ENCODE measurements at regions of chr6 and their contacts with region 1.

Region 1: DNA sequence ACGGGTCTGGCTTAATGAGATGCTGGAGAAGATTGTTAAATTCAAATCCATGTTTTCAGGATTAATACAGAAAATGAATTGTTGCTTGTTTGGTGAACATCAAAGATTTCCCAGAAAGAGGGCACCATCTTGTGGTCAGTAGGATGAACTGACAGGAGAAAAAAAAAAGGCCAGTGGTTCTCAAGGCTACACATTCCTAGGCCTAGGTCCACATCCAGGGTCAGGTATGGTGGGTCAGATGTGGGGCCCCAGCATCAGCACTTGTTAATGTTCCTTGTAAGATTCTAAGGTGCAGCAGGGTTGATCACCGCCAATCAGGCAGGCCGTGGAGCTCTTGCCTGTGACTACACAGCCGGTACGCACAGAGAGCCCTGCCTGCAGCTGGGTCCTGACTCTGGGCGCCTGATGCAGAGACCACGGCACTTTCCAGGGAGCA is 34.0 kb upstream of the FOXO3 start:
- DNase-seq: no peak
- H3K4me3 ChIP-seq: no peak overlapping the region
- H3K27ac ChIP-seq: no peak overlapping the region
- H3K27me3 ChIP-seq: no peaks in the 10 kb centered on the region
- CTCF ChIP-seq: peak; percentile 68 to 93 (median 86)

Region 2: DNA sequence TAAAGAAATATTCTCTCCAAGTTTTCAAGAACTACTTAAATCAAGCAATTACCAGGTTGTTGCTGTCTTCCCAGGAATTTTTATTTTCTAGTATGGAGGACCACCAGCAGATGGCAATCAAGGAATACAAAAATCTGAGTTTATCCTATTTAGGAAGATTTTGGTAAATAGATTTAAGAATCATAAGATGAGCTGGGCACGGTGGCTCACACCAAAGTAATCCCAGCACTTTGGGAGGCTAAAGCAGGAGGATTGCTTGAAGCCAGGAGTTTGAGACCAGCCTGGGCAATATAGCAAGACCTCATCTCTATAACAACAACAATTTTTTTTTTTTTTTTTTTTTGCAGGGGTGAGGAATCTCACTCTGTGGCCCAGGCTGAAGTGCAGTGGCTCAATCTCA is 549.5 kb before region 1 on chr6:
- intact Hi-C with region 1: loop called (anchors 2 to 10 kb)
- DNase-seq: no peak
- H3K4me3 ChIP-seq: no peak overlapping the region
- H3K27ac ChIP-seq: no peak overlapping the region
- H3K27me3 ChIP-seq: no peaks in the 10 kb centered on the region
- CTCF ChIP-seq: peak; percentile 22 to 78 (median 63)

Region 3: GRCh38 chr6:107982486-107982885 is 544.3 kb before region 1 on chr6:
- intact Hi-C with region 1: loop called (anchors 2 to 10 kb)
- DNase-seq: no peak
- H3K4me3 ChIP-seq: no peak overlapping the region
- H3K27ac ChIP-seq: no peak overlapping the region
- H3K27me3 ChIP-seq: no peaks in the 10 kb centered on the region
- CTCF ChIP-seq: no peak

Region 4: DNA sequence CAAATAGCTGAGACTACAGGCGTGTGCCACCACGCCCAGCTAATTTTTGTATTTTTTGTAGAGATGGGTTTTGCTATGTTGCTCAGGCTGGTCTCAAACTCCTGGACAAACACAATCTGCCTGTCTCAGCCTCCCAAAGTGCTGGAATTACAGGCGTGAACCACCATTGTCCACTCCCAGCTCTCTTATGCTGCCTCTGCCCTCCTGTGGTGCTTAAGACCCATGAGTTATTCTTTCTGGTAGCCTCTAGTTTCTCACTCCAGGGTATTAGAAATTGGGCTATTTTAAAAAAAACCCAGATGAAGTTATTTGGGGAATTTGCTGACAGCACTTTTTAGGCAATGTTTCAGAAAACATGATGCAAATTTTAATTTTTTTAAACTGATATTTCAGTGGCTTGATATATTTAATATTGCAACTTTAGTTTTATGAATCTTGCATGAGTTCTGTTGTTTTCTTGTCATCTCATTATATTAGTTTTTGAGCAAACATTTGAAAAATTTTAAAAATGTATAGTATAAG is 80.1 kb before region 1 on chr6:
- intact Hi-C with region 1: no loop called
- DNase-seq: no peak
- H3K4me3 ChIP-seq: no peak overlapping the region
- H3K27ac ChIP-seq: no peak overlapping the region
- H3K27me3 ChIP-seq: no peaks in the 10 kb centered on the region
- CTCF ChIP-seq: no peak

Region 5: DNA sequence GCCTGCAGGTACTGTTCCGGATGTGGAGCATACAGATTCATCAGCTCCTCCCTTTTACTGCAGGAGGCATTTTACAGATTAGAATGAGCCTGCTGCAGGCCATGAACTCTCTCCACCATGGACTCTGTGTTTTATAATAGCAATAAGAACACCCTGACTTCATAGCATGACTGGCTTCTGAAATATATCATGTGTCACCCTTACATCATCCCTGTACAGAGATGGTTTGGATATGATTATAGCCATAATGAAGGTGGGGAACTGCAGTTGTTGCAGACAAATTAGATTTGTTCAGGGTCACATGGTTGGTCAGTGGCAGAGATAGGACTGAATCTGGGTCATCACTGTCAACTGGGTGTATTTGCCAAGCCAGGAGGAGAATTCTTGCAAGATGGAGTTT is 134.7 kb after region 1 on chr6:
- intact Hi-C with region 1: no loop called
- DNase-seq: no peak
- H3K4me3 ChIP-seq: no peak overlapping the region
- H3K27ac ChIP-seq: peak overlapping the region in 2 of 59 donors; percentile 15 to 37
- H3K27me3 ChIP-seq: no peaks in the 10 kb centered on the region
- CTCF ChIP-seq: no peak